PC-9 (cell line): ENCODE measurements at regions of chr12 and their contacts with region 1.

Region 1: DNA sequence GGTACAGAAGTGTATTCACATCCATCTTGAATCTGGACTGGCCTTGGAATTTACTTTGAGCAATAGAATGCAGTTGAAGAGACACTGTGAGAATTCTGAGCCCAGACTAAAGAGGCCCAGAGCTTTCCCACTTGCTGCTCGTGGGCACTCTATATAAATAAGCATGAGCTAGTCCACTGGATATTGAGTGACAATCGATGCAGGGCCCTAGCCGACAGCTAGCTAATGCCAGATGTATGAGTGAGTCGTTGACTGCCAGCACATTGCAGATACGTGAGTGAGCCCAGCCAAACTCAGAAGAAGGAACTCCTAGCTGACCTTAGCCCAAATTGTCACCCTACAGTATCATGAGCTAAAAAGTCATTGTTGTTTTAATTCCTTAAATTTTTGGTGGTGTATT is 24.9 kb downstream of the NAV3 start:
- DNase-seq: no peak
- H3K4me3 ChIP-seq: no peak overlapping the region
- H3K27ac ChIP-seq: no peak overlapping the region
- H3K4me1 ChIP-seq: no peaks in the 10 kb centered on the region
- H3K27me3 ChIP-seq: no peaks in the 10 kb centered on the region
- CTCF ChIP-seq: no peak

Region 2: GRCh38 chr12:77745624-77746023 is 109.9 kb before region 1 on chr12:
- CTCF ChIA-PET with region 1: interaction called, 12 read pairs
- POLR2A ChIA-PET with region 1: no interaction called
- intact Hi-C with region 1: no loop called
- DNase-seq: no peak
- H3K4me3 ChIP-seq: no peak overlapping the region
- H3K27ac ChIP-seq: no peak overlapping the region
- H3K4me1 ChIP-seq: no peaks in the 10 kb centered on the region
- H3K27me3 ChIP-seq: no peaks in the 10 kb centered on the region
- CTCF ChIP-seq: no peak

Region 3: GRCh38 chr12:77878901-77879300 is 23.4 kb after region 1 on chr12:
- CTCF ChIA-PET with region 1: no interaction called
- POLR2A ChIA-PET with region 1: no interaction called
- intact Hi-C with region 1: no loop called
- DNase-seq: no peak
- H3K4me3 ChIP-seq: no peak overlapping the region
- H3K27ac ChIP-seq: no peak overlapping the region
- H3K4me1 ChIP-seq: no peaks in the 10 kb centered on the region
- H3K27me3 ChIP-seq: no peaks in the 10 kb centered on the region
- CTCF ChIP-seq: no peak